ENCODE measurements at regions of chr5 and their contacts with region 1.

Region 1: DNA sequence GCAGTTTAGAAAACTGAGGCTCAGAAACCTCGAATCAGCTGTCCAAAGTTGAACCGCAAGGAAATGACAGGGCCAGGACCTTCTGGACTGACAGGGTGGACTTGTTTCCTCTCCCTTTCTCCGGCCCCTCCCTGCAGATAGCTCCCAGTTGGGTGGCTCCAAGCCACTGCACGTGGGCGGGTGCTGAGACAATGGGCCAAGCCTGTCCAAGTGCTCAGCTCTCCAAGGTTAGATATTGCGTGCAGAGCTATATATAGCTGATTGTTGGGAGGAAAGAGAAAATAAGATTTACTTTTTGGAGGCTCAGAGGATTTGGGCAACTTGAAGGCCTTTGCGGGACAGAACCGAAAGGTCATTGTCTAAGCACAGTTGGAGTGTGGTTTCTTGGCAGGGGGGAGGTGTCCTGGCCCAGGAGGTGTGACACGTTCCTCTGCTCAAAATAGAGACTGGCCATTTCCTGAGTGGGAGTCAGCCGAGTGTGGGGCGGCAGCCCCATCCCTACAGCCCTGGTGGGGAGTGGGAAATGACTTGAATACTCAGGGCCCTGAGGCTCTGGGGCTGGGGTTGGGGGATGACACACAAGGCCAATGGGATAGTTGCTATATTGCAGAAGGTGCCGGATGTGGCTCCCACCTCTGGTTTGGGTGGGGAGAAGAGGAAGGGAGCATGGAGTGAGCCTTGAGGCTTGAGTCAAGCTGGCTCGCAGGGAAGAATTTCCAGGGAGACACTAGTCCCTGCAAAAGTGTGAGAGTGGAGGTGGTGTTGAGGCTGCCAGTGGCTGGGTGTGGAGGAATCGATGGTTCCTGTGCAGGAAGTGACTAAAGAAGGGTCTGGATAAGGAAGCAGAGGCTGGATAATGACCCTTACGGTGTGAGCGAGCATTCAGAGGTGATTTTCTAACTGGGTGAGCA is 44.4 kb upstream of the SMAD5 start:
- DNase-seq: peak; percentile 92

Region 2: GRCh38 chr5:136174021-136174659 is 85.9 kb after region 1 on chr5:
- intact Hi-C with region 1: loop called (anchors 5 kb)
- DNase-seq: no peak

Region 3: GRCh38 chr5:136192526-136193321 is 104.5 kb after region 1 on chr5 and contains the start of gene SMIM32:
- intact Hi-C with region 1: no loop called
- DNase-seq: no peak
- total RNA-seq, gene SMIM32: not detected

Region 4: GRCh38 chr5:136222583-136223274 is 134.5 kb after region 1 on chr5:
- intact Hi-C with region 1: no loop called
- DNase-seq: no peak

Measured in cardiac septum (tissue), 1 donor.